ENCODE measurements at regions of chr1 and their contacts with region 1.

Region 1: GRCh38 chr1:112298558-112298957 is 97.5 kb upstream of the CTTNBP2NL start:
- DNase-seq: peak; percentile 72
- H3K4me3 ChIP-seq: no peak overlapping the region
- H3K27ac ChIP-seq: no peak overlapping the region
- H3K4me1 ChIP-seq: no peaks in the 10 kb centered on the region
- H3K27me3 ChIP-seq: peaks cover 6% of the 10 kb centered on the region in 2 experiments
- CTCF ChIP-seq: peak; percentile 76 to 83
- POLR2A ChIP-seq: no peak

Region 2: DNA sequence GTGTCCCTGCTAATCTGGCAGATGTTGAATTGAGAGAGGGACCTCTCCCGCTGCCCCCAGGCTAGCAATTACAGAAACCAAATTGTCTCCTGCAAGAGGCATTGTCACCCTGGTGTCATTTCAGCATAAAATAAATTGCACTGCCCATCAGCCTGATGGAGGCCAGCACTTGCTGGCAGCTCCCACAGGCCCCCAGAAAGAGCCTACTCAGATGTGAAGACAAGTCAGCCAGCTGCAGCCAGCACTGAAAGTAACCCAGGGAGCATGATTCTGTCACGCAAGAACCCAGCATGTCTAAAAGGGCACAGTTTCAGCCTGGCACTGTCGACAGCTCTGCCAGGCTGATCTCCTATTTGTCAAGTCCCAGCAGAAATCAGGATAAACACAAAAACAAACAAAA is 12.8 kb before region 1 on chr1:
- CTCF ChIA-PET with region 1: interaction called, 11 read pairs
- POLR2A ChIA-PET with region 1: no interaction called
- dilution Hi-C with region 1: no loop called
- intact Hi-C with region 1: no loop called
- DNase-seq: no peak
- H3K4me3 ChIP-seq: no peak overlapping the region
- H3K27ac ChIP-seq: no peak overlapping the region
- H3K4me1 ChIP-seq: no peaks in the 10 kb centered on the region
- H3K27me3 ChIP-seq: no peaks in the 10 kb centered on the region
- CTCF ChIP-seq: no peak
- POLR2A ChIP-seq: no peak

Region 3: GRCh38 chr1:112337028-112337531 is 38.5 kb after region 1 on chr1:
- CTCF ChIA-PET with region 1: interaction called, 95 read pairs
- POLR2A ChIA-PET with region 1: no interaction called
- dilution Hi-C with region 1: no loop called
- intact Hi-C with region 1: loop called (anchors 1 kb)
- DNase-seq: peak; percentile 56
- H3K4me3 ChIP-seq: no peak overlapping the region
- H3K27ac ChIP-seq: no peak overlapping the region
- H3K4me1 ChIP-seq: no peaks in the 10 kb centered on the region
- H3K27me3 ChIP-seq: peaks cover 15 to 24% of the 10 kb centered on the region in 2 experiments
- CTCF ChIP-seq: peak; percentile 60 to 81
- POLR2A ChIP-seq: no peak

Region 4: GRCh38 chr1:112369392-112370285 is 71.1 kb after region 1 on chr1:
- CTCF ChIA-PET with region 1: interaction called, 73 read pairs
- POLR2A ChIA-PET with region 1: interaction called, 3 read pairs
- dilution Hi-C with region 1: no loop called
- intact Hi-C with region 1: loop called (anchors 2 kb)
- DNase-seq: peak; percentile 87
- H3K4me3 ChIP-seq: no peak overlapping the region
- H3K27ac ChIP-seq: no peak overlapping the region
- H3K4me1 ChIP-seq: no peaks in the 10 kb centered on the region
- H3K27me3 ChIP-seq: peaks cover 10 to 12% of the 10 kb centered on the region in 2 experiments
- CTCF ChIP-seq: peak; percentile 98 to 99
- POLR2A ChIP-seq: no peak

Region 5: GRCh38 chr1:112882271-112882744 is 583.8 kb after region 1 on chr1:
- CTCF ChIA-PET with region 1: no interaction called
- POLR2A ChIA-PET with region 1: no interaction called
- dilution Hi-C with region 1: no loop called
- intact Hi-C with region 1: loop called (anchors 5 kb)
- DNase-seq: no peak
- H3K4me3 ChIP-seq: no peak overlapping the region
- H3K27ac ChIP-seq: no peak overlapping the region
- H3K4me1 ChIP-seq: no peaks in the 10 kb centered on the region
- H3K27me3 ChIP-seq: no peaks in the 10 kb centered on the region
- CTCF ChIP-seq: no peak
- POLR2A ChIP-seq: no peak

Measured in endothelial cell of umbilical vein (primary cell).